Thyroid gland (tissue), 4 donors: ENCODE measurements at regions of chr6 and their contacts with region 1.

Region 1: DNA sequence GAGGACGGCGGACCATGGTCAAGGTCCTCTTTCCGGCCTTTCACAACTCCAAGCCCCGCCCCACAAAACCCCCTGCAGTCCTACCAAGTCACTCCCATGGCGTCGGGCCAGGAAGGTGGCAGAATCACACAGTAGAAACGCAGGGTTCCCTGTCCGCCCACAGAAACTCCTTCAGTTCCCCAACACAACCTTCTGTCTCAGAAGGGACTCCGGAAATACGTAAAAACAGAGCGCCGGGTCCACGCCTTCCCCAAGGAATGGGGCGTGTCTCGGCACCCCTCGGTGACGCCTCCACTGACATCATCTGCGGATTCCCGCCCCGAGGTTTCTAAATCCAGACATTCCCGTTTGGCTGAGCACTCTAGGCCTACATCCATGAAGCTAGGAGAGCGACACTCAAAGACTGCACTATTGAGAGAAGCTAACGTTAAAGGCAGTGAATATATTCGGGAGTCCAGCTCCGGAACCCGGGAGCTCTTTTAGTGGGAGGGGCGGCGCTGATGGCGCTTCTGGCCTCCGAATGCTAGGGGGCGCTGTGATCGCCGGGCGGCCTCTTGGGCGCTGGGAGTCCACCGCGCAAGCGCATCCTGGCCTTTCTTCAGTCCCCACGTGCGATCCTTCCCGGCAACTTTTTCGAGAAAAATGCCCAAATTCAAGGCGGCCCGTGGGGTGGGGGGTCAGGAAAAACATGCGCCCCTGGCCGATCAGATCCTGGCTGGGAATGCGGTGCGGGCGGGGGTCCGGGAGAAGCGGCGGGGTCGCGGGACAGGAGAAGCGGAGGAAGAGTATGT is at the starts of genes BYSL and MED20:
- DNase-seq: peak; percentile 92 to 93
- H3K4me3 ChIP-seq: peak within 1 kb of the TSS; percentile 13 to 85 (median 70)
- H3K27ac ChIP-seq: peak within 1 kb of the TSS; percentile 95 to 97 (median 96)
- H3K4me1 ChIP-seq: peaks cover 14 to 23% of the 10 kb centered on the region in 2 donors
- H3K27me3 ChIP-seq: no peaks in the 10 kb centered on the region
- CTCF ChIP-seq: peak; percentile 87 to 98 (median 97)
- POLR2A ChIP-seq: peak in 1 of 2 donors; percentile 72
- total RNA-seq, gene BYSL: 2.8 to 6.1 (median 4.2) TPM
- total RNA-seq, gene MED20: 20.6 to 27.1 (median 24.3) TPM

Region 2: GRCh38 chr6:41859356-41859755 is 61.8 kb before region 1 on chr6:
- intact Hi-C with region 1: no loop called
- DNase-seq: no peak
- H3K4me3 ChIP-seq: no peak overlapping the region
- H3K27ac ChIP-seq: no peak overlapping the region
- H3K4me1 ChIP-seq: no peaks in the 10 kb centered on the region
- H3K27me3 ChIP-seq: no peaks in the 10 kb centered on the region
- CTCF ChIP-seq: no peak
- POLR2A ChIP-seq: no peak

Region 3: GRCh38 chr6:42217519-42218367 is 296.6 kb after region 1 on chr6 and contains the start of gene MRPS10:
- intact Hi-C with region 1: loop called (anchors 5 kb)
- DNase-seq: peak; percentile 95
- H3K4me3 ChIP-seq: peak within 1 kb of the TSS; percentile 14 to 69 (median 68)
- H3K27ac ChIP-seq: peak within 1 kb of the TSS in 2 of 3 donors; percentile 59 to 74
- H3K4me1 ChIP-seq: peaks cover 7 to 15% of the 10 kb centered on the region in 2 donors
- H3K27me3 ChIP-seq: no peaks in the 10 kb centered on the region
- CTCF ChIP-seq: peak in 1 of 6 experiments; percentile 38
- POLR2A ChIP-seq: peak in 1 of 2 donors; percentile 77
- total RNA-seq, gene MRPS10: 35.2 to 42.5 (median 36.9) TPM